ENCODE measurements at regions of chr9 and their contacts with region 1.

Region 1: GRCh38 chr9:98998441-98999151 is 54.9 kb downstream of the COL15A1 start:
- DNase-seq: no peak
- H3K4me3 ChIP-seq: no peak overlapping the region
- H3K27me3 ChIP-seq: peaks cover 1% of the 10 kb centered on the region; the same call in 1 of the 2 replicates
- CTCF ChIP-seq: peak; percentile 93

Region 2: DNA sequence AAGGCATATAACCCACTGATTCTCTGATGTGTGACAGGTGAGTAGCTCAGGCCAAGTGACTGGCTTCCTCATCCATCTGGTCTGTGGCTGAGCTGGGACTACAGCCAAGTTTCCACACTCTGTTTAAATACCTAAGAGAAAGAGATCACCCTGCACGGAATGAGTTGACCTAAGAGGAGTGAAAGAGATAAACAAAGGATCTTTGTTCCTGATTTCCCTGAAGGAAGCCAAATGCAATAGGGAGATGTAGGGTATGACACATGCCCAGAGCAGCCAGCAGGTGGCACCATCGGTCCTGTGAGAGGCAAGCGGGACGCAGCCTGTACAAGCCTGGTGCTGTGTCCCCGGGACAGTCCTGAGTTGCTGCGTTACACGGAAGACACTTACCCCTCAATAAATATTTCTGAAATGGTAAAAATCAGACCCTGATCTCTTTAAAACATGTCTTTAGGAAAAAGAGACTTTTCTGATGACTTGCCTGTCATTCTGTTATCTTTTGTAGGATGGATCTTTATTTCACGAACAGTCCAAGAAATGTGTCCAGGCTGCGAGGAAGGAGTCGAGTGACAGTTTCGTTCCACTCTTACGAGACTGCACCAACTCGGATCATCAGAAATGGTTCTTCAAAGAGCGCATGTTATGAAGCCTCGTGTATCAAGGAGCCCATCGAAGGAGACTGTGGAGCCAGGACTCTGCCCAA is 150.0 kb before region 1 on chr9:
- CTCF ChIA-PET with region 1: interaction called, 32 read pairs
- POLR2A ChIA-PET with region 1: no interaction called
- DNase-seq: no peak
- H3K4me3 ChIP-seq: peak overlapping the region; percentile 26
- H3K27me3 ChIP-seq: peaks cover 6% of the 10 kb centered on the region; the same call in 1 of the 2 replicates
- CTCF ChIP-seq: peak; percentile 95

Region 3: GRCh38 chr9:98899408-98900056 is 99.1 kb before region 1 on chr9:
- CTCF ChIA-PET with region 1: interaction called, 4 read pairs
- POLR2A ChIA-PET with region 1: interaction called, 10 read pairs
- DNase-seq: peak; percentile 68
- H3K4me3 ChIP-seq: no peak overlapping the region
- H3K27me3 ChIP-seq: no peaks in the 10 kb centered on the region
- CTCF ChIP-seq: no peak

Region 4: DNA sequence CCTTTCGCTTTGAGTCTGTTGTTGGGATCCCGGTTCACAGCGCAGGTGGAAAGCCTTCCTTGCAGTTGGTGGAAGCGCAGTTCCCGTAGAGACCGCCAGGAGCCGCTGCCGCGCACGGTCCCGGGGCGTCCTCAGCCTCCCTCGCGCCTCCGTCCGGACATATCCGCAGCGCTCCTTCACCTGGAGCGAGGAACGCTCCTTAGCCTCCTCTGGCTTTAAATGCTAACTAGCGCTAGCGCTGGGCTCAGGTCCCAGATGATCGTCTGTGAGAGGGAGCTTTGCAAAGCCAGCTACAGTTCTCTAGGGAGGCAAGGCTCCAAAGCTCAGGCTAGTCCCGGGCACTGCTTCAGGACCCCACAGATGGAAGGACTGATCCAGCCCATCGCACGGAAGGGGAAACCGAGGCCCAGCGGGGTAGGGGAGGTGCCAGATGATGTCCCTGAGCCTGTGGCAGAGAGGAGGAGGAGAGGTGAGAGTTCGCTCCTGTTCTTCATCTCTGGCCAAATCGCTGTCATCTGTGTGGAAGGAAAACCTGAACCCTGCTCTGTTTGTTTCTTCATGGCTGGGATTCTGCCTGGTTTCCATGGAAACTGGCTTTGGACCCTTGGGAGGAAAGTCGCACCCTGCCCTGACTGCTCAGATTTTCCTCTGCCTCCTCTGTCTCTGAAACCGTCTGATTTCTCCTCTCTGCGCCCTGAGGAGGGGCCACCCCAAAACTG is 23.4 kb before region 1 on chr9:
- CTCF ChIA-PET with region 1: interaction called, 17 read pairs
- POLR2A ChIA-PET with region 1: no interaction called
- DNase-seq: no peak
- H3K4me3 ChIP-seq: no peak overlapping the region
- H3K27me3 ChIP-seq: peaks cover 7% of the 10 kb centered on the region
- CTCF ChIP-seq: peak; percentile 100

Region 5: GRCh38 chr9:99104459-99105151 is 106.0 kb after region 1 on chr9 and contains the start of gene TGFBR1:
- CTCF ChIA-PET with region 1: interaction called, 9 read pairs
- POLR2A ChIA-PET with region 1: interaction called, 13 read pairs
- DNase-seq: peak; percentile 65
- H3K4me3 ChIP-seq: peak within 1 kb of the TSS; percentile 90
- H3K27me3 ChIP-seq: no peaks in the 10 kb centered on the region
- CTCF ChIP-seq: no peak
- polyA plus RNA-seq, gene TGFBR1: 73.5 and 97.7 TPM in 2 replicates